Common myeloid progenitor, CD34-positive (primary cell): ENCODE measurements at regions of chr9 and their contacts with region 1.

Region 1: DNA sequence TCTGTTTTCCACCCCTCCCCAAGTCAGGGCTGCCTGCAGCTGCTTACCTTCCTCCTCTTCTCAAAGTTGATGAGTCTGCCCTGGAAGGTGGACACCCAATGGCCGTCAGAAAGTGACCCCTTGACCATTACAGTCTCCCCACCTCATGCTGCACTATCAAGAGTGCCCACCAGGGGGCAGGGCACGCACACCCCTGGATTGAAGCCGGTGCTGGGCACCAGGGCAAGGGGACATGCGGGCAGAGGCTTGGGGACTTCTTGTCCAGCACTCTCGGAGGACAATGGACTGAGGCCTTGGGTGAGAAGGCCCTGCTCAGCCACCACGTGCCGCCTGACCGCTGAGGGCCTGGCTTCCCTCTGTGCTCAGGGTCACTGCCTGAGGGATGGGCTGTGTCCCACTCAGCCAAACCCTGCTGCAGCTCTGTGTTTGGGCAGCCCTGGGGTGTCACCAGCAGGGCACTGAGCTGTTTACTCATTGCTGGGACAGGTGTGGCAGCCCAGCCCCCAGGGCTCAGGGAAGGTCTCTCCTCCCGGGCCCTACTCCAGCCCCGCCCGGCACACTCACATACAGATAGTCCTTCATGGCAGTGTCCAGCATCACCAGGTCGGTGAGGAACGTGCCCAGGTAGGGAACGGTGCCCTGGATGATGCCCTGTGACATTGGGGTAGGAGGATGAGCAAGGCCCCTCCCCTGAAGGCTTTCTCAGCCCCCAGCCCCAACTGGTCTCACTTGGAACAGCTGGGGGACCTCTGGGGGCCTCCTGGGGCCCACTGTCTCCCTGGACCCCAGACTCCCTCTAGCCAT is 17.7 kb downstream of the RALGDS start:
- DNase-seq: peak in 1 of 3 donors; percentile 40
- H3K4me3 ChIP-seq: no peak overlapping the region
- H3K27ac ChIP-seq: no peak overlapping the region
- H3K4me1 ChIP-seq: no peaks in the 10 kb centered on the region
- H3K27me3 ChIP-seq: no peaks in the 10 kb centered on the region

Region 2: DNA sequence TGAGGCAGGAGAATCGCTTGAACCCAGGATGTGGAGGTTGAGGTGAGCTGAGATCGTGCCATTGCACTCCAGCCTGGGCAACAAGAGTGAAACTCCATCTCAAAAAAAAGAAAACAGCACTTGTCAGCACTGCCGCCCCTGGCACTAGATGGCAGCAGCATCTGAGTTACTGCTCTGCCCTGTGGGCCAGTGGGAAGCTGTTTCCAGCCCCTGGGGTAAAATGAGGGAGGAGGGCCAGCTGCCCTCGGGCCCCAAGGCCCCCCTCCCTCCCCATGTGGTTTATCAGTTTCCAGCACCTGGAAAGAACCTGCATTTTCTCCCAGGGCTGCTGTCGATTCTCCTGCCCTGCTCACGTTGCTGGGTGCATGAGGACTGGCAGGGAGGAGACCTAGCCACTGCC is 54.8 kb before region 1 on chr9:
- CTCF ChIA-PET with region 1: interaction called, 13 read pairs
- POLR2A ChIA-PET with region 1: interaction called, 4 read pairs
- DNase-seq: peak; percentile 57 to 77 (median 76)
- H3K4me3 ChIP-seq: no peak overlapping the region
- H3K27ac ChIP-seq: no peak overlapping the region
- H3K4me1 ChIP-seq: peaks cover 0 to 4% (median 2%) of the 10 kb centered on the region in 4 experiments
- H3K27me3 ChIP-seq: no peaks in the 10 kb centered on the region

Region 3: GRCh38 chr9:133115448-133116345 is 12.3 kb after region 1 on chr9:
- CTCF ChIA-PET with region 1: interaction called, 105 read pairs
- POLR2A ChIA-PET with region 1: interaction called, 10 read pairs
- DNase-seq: peak in 2 of 3 donors; percentile 46 to 50
- H3K4me3 ChIP-seq: peak overlapping the region in 3 of 7 experiments; percentile 9 to 21 (median 20)
- H3K27ac ChIP-seq: peak overlapping the region in 1 of 2 experiments; percentile 34
- H3K4me1 ChIP-seq: peaks cover 2 to 91% (median 83%) of the 10 kb centered on the region in 4 experiments
- H3K27me3 ChIP-seq: no peaks in the 10 kb centered on the region

Region 4: GRCh38 chr9:133133681-133134418 is 30.5 kb after region 1 on chr9:
- CTCF ChIA-PET with region 1: interaction called, 18 read pairs
- POLR2A ChIA-PET with region 1: no interaction called
- DNase-seq: peak; percentile 96 to 98 (median 97)
- H3K4me3 ChIP-seq: peak overlapping the region in 2 of 7 experiments; percentile 25 to 42
- H3K27ac ChIP-seq: peak overlapping the region; percentile 97 to 98
- H3K4me1 ChIP-seq: peaks cover 3 to 72% (median 59%) of the 10 kb centered on the region in 4 experiments
- H3K27me3 ChIP-seq: no peaks in the 10 kb centered on the region

Region 5: DNA sequence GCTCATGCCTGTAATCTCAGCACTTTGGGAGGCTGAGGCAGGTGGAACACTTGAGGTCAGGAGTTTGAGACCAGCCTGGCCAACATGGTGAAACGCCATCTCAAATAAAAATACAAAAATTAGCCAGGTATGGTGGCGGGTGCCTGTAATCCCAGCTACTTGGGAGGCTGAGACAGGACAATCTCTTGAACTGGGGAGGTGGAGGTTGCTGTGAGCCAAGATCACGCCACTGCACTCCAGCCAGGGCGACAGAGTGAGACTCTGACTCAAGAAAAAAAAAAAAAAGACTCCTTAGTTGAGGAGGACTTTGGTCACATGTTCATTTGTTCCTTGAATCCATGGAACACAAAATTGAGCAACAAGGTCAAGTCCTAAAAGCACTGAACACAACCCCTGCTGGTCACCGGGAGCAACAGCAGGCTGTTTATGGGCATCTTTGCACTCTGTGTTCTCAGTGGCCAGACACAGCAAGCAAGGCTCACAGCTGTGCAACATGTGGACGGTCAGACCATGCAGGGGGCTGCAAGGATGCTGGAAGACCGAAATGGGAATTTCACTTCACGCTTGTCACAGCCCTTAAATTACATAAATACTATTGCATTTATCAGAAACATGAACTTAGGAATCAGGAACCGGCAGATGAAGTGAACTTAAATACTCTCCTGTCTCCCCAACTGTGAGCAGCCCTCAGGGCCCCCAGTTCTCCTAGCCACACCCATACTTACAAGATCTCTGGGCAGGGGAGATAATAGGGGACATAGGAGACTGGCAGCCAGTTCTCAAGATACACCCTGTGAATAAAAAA is 57.6 kb after region 1 on chr9:
- CTCF ChIA-PET with region 1: interaction called, 10 read pairs
- POLR2A ChIA-PET with region 1: no interaction called
- DNase-seq: peak; percentile 58 to 69 (median 67)
- H3K4me3 ChIP-seq: no peak overlapping the region
- H3K27ac ChIP-seq: no peak overlapping the region
- H3K4me1 ChIP-seq: peaks cover 0 to 36% (median 32%) of the 10 kb centered on the region in 4 experiments
- H3K27me3 ChIP-seq: no peaks in the 10 kb centered on the region